HepG2 (cell line): ENCODE measurements at regions of chr19 and their contacts with region 1.

Region 1: DNA sequence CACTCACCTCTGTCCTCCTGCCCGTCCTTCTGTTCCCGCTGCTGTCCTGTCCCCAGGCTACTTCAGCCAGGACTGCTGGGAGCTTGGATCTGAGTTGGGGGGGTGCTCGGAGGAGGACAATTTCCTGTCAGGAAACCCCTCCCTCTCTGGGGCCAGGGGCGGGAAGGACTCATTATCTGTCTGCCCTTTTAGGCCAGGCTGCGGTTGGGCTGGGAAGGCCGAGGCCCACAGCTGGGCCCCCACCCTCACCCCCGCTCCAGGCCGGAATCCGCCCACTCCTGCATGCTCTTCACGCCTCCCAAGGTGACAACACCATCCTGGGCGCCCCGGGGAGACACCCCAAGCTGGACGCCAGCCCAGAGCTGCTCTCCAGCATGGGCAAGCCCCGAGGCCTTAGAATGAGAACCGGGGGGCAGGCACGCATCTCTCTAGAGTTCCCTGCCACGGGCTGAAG is at the start of gene EXOC3L2:
- DNase-seq: no peak
- ATAC-seq: peak; percentile 28; the same call in 2 of the 3 replicates
- H3K4me3 ChIP-seq: peak within 1 kb of the TSS in 1 of 3 experiments; percentile 54; a peak in 2 of 6 replicates
- H3K27ac ChIP-seq: no peak within 1 kb of the TSS
- H3K4me1 ChIP-seq: peaks cover 49% of the 10 kb centered on the region
- H3K27me3 ChIP-seq: peaks cover 4 to 14% of the 10 kb centered on the region in 2 experiments; a peak in 4 of 5 replicates
- CTCF ChIP-seq: no peak
- EP300 ChIP-seq: no peak
- POLR2A ChIP-seq: no peak
- RAD21 ChIP-seq: no peak
- total RNA-seq, gene EXOC3L2: not detected in 2 replicates

Region 2: GRCh38 chr19:45187421-45188100 is 57.8 kb before region 1 on chr19:
- CTCF ChIA-PET with region 1: no interaction called
- POLR2A ChIA-PET with region 1: no interaction called
- in situ Hi-C with region 1: no loop called
- intact Hi-C with region 1: loop called (anchors 10 kb)
- DNase-seq: peak; percentile 49
- ATAC-seq: peak; percentile 59
- H3K4me3 ChIP-seq: peak overlapping the region in 1 of 3 experiments; percentile 43; a peak in 1 of 6 replicates
- H3K27ac ChIP-seq: no peak overlapping the region
- H3K4me1 ChIP-seq: peaks cover 29% of the 10 kb centered on the region
- H3K27me3 ChIP-seq: peaks cover 0 to 1% of the 10 kb centered on the region in 2 experiments; a peak in 1 of 5 replicates
- CTCF ChIP-seq: peak; percentile 74
- EP300 ChIP-seq: no peak
- POLR2A ChIP-seq: no peak
- RAD21 ChIP-seq: peak; percentile 34; the same call in 1 of the 2 replicates